ENCODE measurements at regions of chr1 and their contacts with region 1.

Region 1: GRCh38 chr1:16348426-16349182 is 3.7 kb downstream of the FBXO42 start:
- DNase-seq: no peak
- H3K4me3 ChIP-seq: no peak overlapping the region
- H3K27ac ChIP-seq: peak overlapping the region in 1 of 5 donors; percentile 32
- H3K4me1 ChIP-seq: peaks cover 17 to 54% (median 32%) of the 10 kb centered on the region in 4 donors
- H3K27me3 ChIP-seq: no peaks in the 10 kb centered on the region
- CTCF ChIP-seq: no peak
- EP300 ChIP-seq: no peak
- POLR2A ChIP-seq: no peak

Region 2: DNA sequence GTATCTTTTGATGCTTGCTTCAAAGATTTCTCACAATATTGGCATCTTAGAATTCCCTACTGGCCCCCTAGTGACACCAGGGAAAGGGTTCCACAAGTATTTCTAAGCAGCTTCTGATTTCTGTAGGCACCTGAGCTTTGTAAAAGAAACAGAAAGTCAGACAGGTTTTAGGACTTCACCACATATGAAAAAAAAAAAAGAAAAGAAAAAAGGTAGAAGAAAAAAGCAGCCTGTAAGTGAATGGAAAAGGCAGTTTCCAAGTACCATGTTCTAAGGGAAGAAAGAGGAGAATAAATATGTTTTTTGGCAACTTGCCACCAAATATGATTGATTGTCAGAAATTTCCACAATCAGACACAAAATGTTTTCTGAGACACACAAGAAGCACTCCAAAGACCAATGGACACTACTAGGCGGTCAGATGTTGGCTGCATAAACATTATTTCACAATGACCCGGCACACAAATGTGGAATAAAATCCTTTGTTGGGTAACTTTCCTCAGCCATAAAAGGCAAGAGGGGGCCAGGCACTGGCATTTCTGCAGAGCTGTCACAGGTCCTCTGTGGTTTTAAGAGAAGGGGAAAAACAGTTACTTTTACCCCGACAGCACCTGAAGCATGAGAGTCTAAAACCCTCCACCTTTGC is 98.9 kb before region 1 on chr1:
- intact Hi-C with region 1: loop called (anchors 10 kb)
- DNase-seq: peak in 1 of 2 donors; percentile 53
- H3K4me3 ChIP-seq: no peak overlapping the region
- H3K27ac ChIP-seq: peak overlapping the region; percentile 11 to 86 (median 75)
- H3K4me1 ChIP-seq: peaks cover 41 to 68% (median 50%) of the 10 kb centered on the region in 4 donors
- H3K27me3 ChIP-seq: no peaks in the 10 kb centered on the region
- CTCF ChIP-seq: no peak
- EP300 ChIP-seq: no peak
- POLR2A ChIP-seq: no peak